Naive thymus-derived CD8-positive, alpha-beta T cell (primary cell): ENCODE measurements at regions of chr1 and their contacts with region 1.

Region 1: GRCh38 chr1:39738622-39739366 is at the start of gene PPIE:
- DNase-seq: peak; percentile 75 to 96 (median 88)
- ATAC-seq: peak; percentile 97
- H3K4me3 Mint-ChIP-seq: peak within 1 kb of the TSS; percentile 89 to 99 (median 97)
- H3K27ac Mint-ChIP-seq: peak within 1 kb of the TSS; percentile 80 to 99 (median 97)
- H3K4me1 Mint-ChIP-seq: peaks cover 18 to 43% (median 41%) of the 10 kb centered on the region in 4 donors
- H3K27me3 Mint-ChIP-seq: peaks cover 3 to 36% (median 12%) of the 10 kb centered on the region in 5 donors
- polyA plus RNA-seq, gene PPIE: 101 to 123 (median 102) TPM

Region 2: GRCh38 chr1:39672551-39672947 is 66.2 kb before region 1 on chr1:
- POLR2A ChIA-PET with region 1: interaction called, 11 read pairs
- DNase-seq: peak in 7 of 10 donors; percentile 14 to 71 (median 31)
- ATAC-seq: peak; percentile 33 to 37
- H3K4me3 Mint-ChIP-seq: peak overlapping the region in 9 of 10 donors; percentile 53 to 79 (median 71)
- H3K27ac Mint-ChIP-seq: peak overlapping the region in 2 of 10 donors; percentile 11 to 43
- H3K4me1 Mint-ChIP-seq: peaks cover 0 to 16% (median 5%) of the 10 kb centered on the region in 4 donors
- H3K27me3 Mint-ChIP-seq: peaks cover 16 to 44% (median 32%) of the 10 kb centered on the region in 5 donors

Region 3: DNA sequence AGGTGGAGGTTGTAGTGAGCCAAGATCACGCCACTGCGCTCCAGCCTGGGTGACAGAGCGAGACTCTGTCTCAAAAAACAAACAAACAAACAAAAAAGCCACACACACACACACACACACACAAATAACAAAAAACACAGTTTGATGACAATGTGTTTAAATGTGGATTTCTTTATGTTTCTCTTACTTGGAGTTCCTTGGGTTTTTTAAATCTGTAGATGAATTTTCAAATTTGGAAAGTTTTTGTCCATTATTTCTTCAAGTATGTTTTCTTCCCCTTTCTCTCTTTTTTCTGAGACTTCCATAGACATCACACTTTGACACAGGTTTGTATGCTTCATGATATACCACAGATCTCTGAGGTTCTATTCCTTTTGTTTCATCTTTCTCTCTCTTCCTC is 12.2 kb before region 1 on chr1:
- POLR2A ChIA-PET with region 1: interaction called, 12 read pairs
- DNase-seq: no peak
- ATAC-seq: no peak
- H3K4me3 Mint-ChIP-seq: no peak overlapping the region
- H3K27ac Mint-ChIP-seq: no peak overlapping the region
- H3K4me1 Mint-ChIP-seq: peaks cover 0 to 3% (median 2%) of the 10 kb centered on the region in 4 donors
- H3K27me3 Mint-ChIP-seq: peaks cover 28 to 78% (median 51%) of the 10 kb centered on the region in 5 donors